CD4-positive, alpha-beta memory T cell (primary cell): ENCODE measurements at regions of chr10 and their contacts with region 1.

Region 1: DNA sequence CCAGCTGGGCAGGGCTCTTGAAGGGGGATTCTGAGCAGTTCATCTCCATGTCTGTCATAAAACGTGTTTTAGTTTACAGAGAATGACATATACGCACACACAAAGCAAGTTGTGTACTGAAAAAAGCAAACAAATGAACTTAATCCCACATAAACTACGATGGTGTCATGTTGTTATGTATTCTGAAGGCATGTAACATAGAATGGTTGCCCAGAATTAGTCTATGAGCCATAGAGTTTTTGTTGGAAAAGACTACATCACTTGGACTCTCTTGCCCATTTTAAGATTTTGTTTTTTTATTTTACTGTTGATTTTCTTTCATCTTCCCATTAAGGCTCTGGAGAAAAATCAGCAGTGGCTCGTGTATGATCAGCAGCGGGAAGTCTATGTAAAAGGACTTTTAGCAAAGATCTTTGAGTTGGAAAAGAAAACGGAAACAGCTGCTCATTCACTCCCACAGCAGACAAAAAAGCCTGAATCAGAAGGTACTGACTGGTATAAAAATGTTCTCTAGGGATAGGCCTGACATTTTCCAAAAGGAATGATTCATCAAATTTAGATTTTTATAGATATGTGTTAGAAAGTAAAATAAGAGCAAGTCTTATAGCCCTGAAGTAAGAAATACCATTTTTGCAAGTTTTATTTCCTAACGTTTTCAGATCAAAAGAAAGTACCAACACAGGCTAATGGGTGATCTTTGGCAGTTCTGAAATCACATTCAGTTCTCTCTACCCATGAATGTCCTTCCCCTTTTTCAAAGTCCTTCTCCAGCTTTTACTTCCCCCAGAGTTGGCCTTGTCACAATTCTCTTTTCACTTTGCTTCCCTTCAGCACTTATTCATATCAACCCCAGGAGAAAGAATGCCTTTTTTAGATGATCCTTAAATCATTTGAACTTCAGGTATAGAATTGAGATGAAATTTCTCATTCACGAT is 18.9 kb downstream of the CEP55 start:
- DNase-seq: no peak
- H3K4me3 ChIP-seq: no peak overlapping the region
- H3K4me3 Mint-ChIP-seq: no peak overlapping the region
- H3K27ac ChIP-seq: no peak overlapping the region
- H3K27ac Mint-ChIP-seq: no peak overlapping the region
- H3K4me1 ChIP-seq: no peaks in the 10 kb centered on the region
- H3K4me1 Mint-ChIP-seq: peaks cover 0 to 4% (median 3%) of the 10 kb centered on the region in 4 donors
- H3K27me3 ChIP-seq: no peaks in the 10 kb centered on the region
- H3K27me3 Mint-ChIP-seq: no peaks in the 10 kb centered on the region

Region 2: DNA sequence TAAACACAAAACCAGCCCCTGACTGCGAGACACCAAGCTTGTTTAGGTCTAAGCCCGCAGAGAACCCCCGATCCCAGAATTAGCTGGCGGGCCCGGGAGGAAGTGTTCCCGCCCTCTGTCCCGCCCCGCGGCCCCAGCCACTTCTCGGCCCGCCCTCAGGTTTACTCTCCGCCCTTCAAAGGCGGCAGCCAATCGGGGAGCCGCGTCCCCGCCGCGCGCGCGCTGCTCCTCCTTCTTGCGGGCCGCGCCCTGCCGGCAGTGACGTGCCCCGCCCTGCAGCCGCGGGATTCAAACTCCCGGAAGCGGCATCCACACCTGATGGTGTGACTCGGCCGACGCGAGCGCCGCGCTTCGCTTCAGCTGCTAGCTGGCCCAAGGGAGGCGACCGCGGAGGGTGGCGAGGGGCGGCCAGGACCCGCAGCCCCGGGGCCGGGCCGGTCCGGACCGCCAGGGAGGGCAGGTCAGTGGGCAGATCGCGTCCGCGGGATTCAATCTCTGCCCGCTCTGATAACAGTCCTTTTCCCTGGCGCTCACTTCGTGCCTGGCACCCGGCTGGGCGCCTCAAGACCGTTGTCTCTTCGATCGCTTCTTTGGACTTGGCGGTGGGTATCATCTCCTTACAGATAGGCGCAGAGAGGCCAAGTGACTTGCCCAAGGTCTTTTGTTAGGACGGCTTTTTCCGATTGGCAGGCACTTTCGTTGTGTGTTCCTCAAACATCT is 18.9 kb before region 1 on chr10 and contains the start of gene CEP55:
- CTCF ChIA-PET with region 1: interaction called, 126 read pairs
- POLR2A ChIA-PET with region 1: no interaction called
- intact Hi-C with region 1: no loop called
- DNase-seq: peak; percentile 93 to 97 (median 94)
- H3K4me3 ChIP-seq: peak within 1 kb of the TSS; percentile 83 to 94
- H3K4me3 Mint-ChIP-seq: peak within 1 kb of the TSS; percentile 92 to 95 (median 93)
- H3K27ac ChIP-seq: peak within 1 kb of the TSS; percentile 37
- H3K27ac Mint-ChIP-seq: peak within 1 kb of the TSS; percentile 54 to 92 (median 89)
- H3K4me1 ChIP-seq: peaks cover 23% of the 10 kb centered on the region
- H3K4me1 Mint-ChIP-seq: peaks cover 13 to 23% (median 19%) of the 10 kb centered on the region in 4 donors
- H3K27me3 ChIP-seq: no peaks in the 10 kb centered on the region
- H3K27me3 Mint-ChIP-seq: no peaks in the 10 kb centered on the region
- total RNA-seq, gene CEP55: 0.17 to 0.30 TPM

Region 3: DNA sequence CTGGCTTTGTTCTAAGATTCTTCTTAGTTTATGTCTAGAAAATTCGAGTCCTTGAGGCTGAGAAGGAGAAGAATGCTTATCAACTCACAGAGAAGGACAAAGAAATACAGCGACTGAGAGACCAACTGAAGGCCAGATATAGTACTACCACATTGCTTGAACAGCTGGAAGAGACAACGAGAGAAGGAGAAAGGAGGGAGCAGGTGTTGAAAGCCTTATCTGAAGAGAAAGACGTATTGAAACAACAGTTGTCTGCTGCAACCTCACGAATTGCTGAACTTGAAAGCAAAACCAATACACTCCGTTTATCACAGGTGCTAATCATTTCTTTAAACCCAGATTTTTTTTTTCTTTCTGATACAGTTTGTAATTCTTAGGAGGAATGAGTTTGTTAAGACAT is 12.3 kb before region 1 on chr10:
- CTCF ChIA-PET with region 1: interaction called, 39 read pairs
- POLR2A ChIA-PET with region 1: interaction called, 5 read pairs
- intact Hi-C with region 1: no loop called
- DNase-seq: peak in 1 of 5 donors; percentile 7
- H3K4me3 ChIP-seq: peak overlapping the region in 1 of 2 donors; percentile 43
- H3K4me3 Mint-ChIP-seq: peak overlapping the region; percentile 61 to 86 (median 73)
- H3K27ac ChIP-seq: peak overlapping the region; percentile 31
- H3K27ac Mint-ChIP-seq: peak overlapping the region; percentile 23 to 93 (median 72)
- H3K4me1 ChIP-seq: peaks cover 28% of the 10 kb centered on the region
- H3K4me1 Mint-ChIP-seq: peaks cover 15 to 31% (median 23%) of the 10 kb centered on the region in 4 donors
- H3K27me3 ChIP-seq: no peaks in the 10 kb centered on the region
- H3K27me3 Mint-ChIP-seq: no peaks in the 10 kb centered on the region

Region 4: GRCh38 chr10:93573051-93573909 is 57.9 kb after region 1 on chr10:
- CTCF ChIA-PET with region 1: no interaction called
- POLR2A ChIA-PET with region 1: no interaction called
- intact Hi-C with region 1: no loop called
- DNase-seq: no peak
- H3K4me3 ChIP-seq: no peak overlapping the region
- H3K4me3 Mint-ChIP-seq: peak overlapping the region in 1 of 8 donors; percentile 4
- H3K27ac ChIP-seq: no peak overlapping the region
- H3K27ac Mint-ChIP-seq: peak overlapping the region in 1 of 7 donors; percentile 4
- H3K4me1 ChIP-seq: peaks cover 6% of the 10 kb centered on the region
- H3K4me1 Mint-ChIP-seq: peaks cover 5 to 12% (median 7%) of the 10 kb centered on the region in 4 donors
- H3K27me3 ChIP-seq: peaks cover 3% of the 10 kb centered on the region
- H3K27me3 Mint-ChIP-seq: peaks cover 18 to 38% of the 10 kb centered on the region in 2 donors

Region 5: DNA sequence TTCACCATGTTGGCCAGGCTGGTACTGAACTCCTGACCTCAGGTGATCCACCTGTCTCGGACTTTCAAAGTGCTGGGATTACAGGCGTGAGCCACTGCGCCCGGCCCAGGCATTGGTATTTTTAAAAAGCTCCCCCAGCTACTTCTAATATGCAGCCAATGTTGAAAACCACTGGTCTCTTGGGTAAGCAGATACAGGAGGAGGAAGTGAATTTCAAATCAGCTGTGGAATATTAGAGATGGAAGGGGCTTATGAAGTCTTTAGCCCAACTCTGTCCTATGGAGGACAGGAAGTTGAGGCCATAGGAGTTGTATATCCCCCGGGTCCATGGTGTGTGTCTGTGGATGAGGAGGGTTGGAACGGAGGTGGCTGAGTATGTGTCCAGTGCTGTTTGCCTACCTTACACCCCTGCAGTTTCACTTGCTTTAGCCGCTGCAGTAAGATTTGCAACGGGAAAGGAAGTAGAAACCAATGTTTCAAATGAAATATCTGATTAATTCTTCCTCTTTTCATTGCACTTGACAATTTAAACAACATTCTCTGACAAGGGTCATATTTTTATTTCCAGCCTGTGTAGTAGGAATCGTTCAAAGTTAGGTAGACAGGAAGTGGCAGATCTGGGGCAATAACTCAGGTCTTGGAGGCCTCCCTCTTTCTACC is 100.4 kb after region 1 on chr10:
- CTCF ChIA-PET with region 1: no interaction called
- POLR2A ChIA-PET with region 1: no interaction called
- intact Hi-C with region 1: no loop called
- DNase-seq: no peak
- H3K4me3 ChIP-seq: no peak overlapping the region
- H3K4me3 Mint-ChIP-seq: peak overlapping the region in 1 of 8 donors; percentile 23
- H3K27ac ChIP-seq: no peak overlapping the region
- H3K27ac Mint-ChIP-seq: no peak overlapping the region
- H3K4me1 ChIP-seq: no peaks in the 10 kb centered on the region
- H3K4me1 Mint-ChIP-seq: peaks cover 0 to 4% (median 0%) of the 10 kb centered on the region in 4 donors
- H3K27me3 ChIP-seq: no peaks in the 10 kb centered on the region
- H3K27me3 Mint-ChIP-seq: peaks cover 2 to 5% of the 10 kb centered on the region in 2 donors

Region 6: DNA sequence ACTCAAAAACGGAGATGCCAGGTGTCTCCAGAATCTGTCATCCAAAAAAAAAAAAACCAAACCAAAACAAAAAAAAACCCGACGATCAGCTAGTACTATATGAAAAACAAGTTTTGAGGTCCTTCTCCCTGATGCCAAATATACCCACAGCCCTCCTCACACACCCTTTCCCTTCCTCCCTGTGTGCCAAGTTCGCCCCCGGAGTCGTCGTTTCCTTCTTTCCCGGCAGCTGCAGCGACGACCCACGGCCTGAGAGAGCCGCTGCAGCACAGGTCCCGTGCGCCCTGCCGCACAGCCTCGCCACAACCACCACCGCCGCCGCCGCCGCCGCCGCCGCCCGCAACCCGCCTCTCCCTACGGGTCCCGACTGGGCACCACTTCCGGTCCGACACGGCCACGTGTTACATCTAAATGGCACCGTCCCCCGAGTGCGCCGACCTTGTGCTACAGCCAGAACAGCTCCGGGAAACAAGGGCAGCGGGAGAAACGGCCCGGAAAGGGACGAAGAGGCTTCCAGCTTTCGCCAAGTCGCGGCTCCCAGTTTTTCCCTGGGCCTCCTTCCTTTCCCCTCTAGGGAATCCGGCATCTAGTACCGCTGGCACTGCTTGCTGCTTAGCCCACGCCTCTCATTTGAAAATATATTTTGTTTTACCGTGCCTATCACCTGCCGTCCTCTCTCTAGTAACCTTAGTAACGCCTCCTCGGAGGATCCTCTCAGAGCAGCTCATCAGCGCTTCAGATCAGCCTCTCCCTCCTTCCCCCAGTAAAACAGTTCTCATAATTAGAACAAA is 187.1 kb after region 1 on chr10 and contains the start of gene FRA10AC1:
- CTCF ChIA-PET with region 1: no interaction called
- POLR2A ChIA-PET with region 1: no interaction called
- intact Hi-C with region 1: no loop called
- DNase-seq: peak; percentile 83 to 89 (median 84)
- H3K4me3 ChIP-seq: peak within 1 kb of the TSS; percentile 78 to 100
- H3K4me3 Mint-ChIP-seq: no peak within 1 kb of the TSS
- H3K27ac ChIP-seq: peak within 1 kb of the TSS; percentile 63
- H3K27ac Mint-ChIP-seq: no peak within 1 kb of the TSS
- H3K4me1 ChIP-seq: peaks cover 28% of the 10 kb centered on the region
- H3K4me1 Mint-ChIP-seq: peaks cover 6 to 23% (median 16%) of the 10 kb centered on the region in 4 donors
- H3K27me3 ChIP-seq: no peaks in the 10 kb centered on the region
- H3K27me3 Mint-ChIP-seq: no peaks in the 10 kb centered on the region
- total RNA-seq, gene FRA10AC1: 21.6 to 32.5 TPM